Activated naive CD8-positive, alpha-beta T cell treated with anti-CD3 and anti-CD28 coated beads, Interleukin-2, amount 10 ng/mL, durations not matched to agents 7 days and 5 days (primary cell): ENCODE measurements at regions of chr22 and their contacts with region 1.

Region 1: DNA sequence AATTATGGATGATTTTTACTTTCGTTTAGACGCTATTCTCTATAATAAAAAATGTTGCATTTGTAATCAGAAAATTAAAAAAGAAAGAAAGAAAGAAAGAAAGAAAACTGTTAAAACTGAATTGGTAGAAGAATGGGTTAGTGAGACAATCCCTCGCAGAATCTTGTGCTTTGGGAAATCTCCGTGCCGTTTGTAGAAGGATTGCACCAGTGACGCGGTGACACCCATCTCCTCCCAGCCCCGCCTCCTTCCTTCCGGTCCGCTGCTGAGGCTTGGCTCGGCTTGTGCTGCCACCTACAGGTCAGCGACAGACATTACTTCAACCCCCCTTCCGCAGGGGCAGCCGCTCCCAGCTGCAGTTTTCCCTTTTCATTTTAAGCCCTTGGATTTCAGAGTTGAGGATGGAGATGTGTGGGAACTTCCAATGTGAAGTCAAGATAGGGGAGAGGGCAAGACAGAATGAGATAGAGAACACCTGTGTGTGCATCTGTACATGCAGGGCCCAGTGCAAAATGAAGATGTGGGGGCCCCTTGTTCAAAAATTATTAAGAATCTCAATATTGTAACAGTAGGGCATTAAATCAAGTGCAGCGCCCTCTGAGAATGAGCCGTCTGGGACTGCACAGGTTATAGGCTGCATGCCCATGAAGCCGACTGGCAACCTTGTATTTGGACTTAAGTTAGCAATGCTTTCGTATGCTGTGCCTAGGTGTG is 41.1 kb downstream of the TST start:
- DNase-seq: peak; percentile 90
- ATAC-seq: peak; percentile 79
- H3K4me3 Mint-ChIP-seq: peak overlapping the region; percentile 89
- H3K27ac Mint-ChIP-seq: peak overlapping the region; percentile 94
- H3K4me1 Mint-ChIP-seq: peaks cover 10% of the 10 kb centered on the region
- H3K27me3 Mint-ChIP-seq: peaks cover 18% of the 10 kb centered on the region

Region 2: DNA sequence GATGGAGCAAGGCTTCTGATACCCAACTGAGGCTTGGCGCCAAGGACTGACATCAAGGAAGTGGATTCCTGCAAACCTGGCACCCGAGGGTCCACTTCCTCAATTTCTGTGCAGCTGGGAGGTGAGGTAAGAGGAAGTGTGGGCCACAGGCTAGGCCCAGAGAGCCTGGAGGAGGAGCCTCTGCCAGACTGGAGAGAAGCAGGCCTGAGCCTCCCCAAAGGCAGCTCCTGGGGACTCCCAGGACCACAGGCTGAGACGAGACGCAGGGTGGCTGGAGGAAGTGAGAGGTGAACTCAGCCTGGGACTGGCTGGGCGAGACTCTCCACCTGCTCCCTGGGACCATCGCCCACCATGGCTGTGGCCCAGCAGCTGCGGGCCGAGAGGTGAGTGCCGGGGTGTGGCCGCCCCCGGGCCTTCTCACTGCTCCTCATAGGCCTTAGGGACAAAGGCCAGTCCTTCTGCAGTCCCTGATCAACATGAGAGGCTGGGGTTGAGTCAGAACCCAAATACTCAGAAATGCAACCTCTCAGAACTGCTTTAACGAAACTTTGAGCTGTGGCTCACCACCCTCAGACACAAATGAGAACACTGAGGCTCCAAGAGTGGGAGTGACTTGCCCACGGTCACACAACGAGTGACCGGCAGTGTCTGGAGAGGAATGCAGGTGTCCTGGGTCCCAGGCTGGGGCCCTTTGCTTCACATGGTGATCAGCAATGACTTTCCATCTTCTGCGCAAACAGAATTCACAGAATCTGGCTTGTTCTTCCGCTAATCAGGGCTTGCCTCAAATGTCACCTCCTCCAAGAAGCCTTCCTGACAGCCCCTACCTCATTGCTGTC is 117.1 kb before region 1 on chr22 and contains the start of gene NCF4:
- POLR2A ChIA-PET with region 1: interaction called, 14 read pairs
- DNase-seq: peak; percentile 74
- ATAC-seq: peak; percentile 84
- H3K4me3 Mint-ChIP-seq: peak within 1 kb of the TSS; percentile 75
- H3K27ac Mint-ChIP-seq: peak within 1 kb of the TSS; percentile 94
- H3K4me1 Mint-ChIP-seq: peaks cover 57% of the 10 kb centered on the region
- H3K27me3 Mint-ChIP-seq: no peaks in the 10 kb centered on the region
- total RNA-seq, gene NCF4: 31.0 to 35.3 TPM